ENCODE measurements at regions of chr3 and their contacts with region 1.

Region 1: GRCh38 chr3:100068826-100069225 is 45.5 kb downstream of the FILIP1L start:
- DNase-seq: peak; percentile 9
- H3K4me3 ChIP-seq: no peak overlapping the region
- H3K27ac ChIP-seq: no peak overlapping the region
- H3K4me1 ChIP-seq: peaks cover 7 to 45% (median 21%) of the 10 kb centered on the region in 3 donors
- H3K27me3 ChIP-seq: no peaks in the 10 kb centered on the region
- CTCF ChIP-seq: peak; percentile 27 to 84 (median 73)
- POLR2A ChIP-seq: no peak

Region 2: DNA sequence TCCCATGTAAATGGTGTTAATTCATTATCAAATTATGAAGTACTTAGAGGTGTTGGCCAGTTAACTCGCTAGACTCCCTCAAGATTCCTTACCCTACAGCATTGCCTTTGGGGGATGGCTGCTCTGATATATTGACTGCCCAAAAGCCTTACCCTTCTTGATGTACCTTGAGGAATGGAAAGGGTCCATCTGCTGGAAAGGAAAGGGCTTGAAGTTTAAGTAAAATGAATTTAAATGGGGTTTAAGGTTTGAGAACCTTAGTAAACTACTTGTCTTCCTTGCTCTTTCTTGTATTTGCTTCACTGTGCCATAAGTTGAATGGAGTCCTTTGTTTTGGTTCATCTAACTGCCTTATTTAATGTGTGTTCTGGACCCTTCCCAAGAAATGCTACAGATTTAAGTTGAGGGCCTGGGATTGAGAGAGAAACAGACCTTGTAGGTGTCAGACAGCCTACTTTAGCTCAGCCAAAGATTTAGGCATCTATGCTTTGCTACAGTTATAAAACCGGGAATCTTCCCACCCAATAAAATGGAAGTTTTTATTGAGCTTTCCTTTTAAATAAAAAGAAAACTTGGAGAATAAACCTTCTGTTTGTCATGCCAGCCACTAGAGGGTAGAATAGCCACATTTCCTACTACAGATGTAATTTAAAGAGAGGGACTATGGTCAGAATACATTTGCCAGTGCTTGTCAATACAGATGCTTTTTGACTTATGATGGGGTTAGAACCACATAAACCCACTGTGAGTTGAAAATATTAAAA is 225.8 kb before region 1 on chr3:
- intact Hi-C with region 1: loop called (anchors 10 kb)
- DNase-seq: no peak
- H3K4me3 ChIP-seq: peak overlapping the region in 1 of 4 donors; percentile 10
- H3K27ac ChIP-seq: peak overlapping the region in 3 of 4 donors; percentile 75 to 85 (median 78)
- H3K4me1 ChIP-seq: peaks cover 0 to 52% (median 8%) of the 10 kb centered on the region in 3 donors
- H3K27me3 ChIP-seq: no peaks in the 10 kb centered on the region
- CTCF ChIP-seq: peak; percentile 24 to 80 (median 68)
- POLR2A ChIP-seq: no peak

Measured in esophagus squamous epithelium (tissue), 5 donors.